B cell (primary cell): ENCODE measurements at regions of chrX and their contacts with region 1.

Region 1: DNA sequence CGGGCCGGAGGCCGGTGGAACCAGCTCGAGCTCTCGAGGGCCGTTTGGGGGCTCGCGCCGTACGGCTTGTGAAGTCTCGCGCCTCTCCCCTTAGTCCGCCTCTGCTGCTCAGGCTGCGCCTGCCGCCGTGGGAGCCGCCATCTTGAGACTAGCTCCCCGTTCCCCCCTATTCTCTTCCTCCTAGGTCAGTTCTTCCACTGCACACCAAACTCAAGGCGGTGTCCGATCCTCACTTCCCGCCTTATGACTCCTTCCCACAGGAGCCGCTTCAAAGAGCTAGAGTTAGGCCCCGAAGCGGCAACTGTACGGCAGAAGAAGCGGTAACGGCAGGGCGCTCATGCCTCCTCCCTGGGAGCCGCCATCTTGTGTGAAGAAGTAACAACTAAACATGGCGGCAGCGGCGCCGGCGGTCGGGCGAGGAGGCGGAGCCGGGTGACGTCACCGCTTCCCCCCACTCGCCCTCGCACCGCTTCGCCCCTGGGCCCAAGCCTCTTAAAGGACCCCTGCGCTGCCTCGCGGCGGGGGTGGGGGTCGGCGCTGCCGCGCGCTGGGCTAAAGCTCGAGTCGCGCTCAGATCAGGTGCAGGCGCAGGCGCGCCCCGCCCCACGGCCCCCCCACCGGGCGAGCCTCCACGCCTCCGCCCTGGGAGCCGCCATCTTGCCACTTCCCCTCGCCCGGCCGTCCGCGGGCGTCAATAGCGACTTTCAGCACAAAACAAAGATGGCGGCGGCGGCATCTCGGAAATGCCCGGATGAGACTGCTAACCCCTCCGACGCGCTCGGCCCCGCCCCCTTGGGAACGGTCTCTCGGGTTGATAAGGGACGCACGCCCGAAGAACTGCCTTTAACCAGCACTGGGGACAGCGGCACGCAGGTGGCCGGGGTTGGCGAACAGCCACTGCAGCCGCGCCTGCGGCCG is at the start of gene HCFC1:
- DNase-seq: peak; percentile 95
- ATAC-seq: peak; percentile 46
- H3K4me3 ChIP-seq: peak within 1 kb of the TSS; percentile 63 to 99 (median 97)
- H3K4me3 Mint-ChIP-seq: peak within 1 kb of the TSS; percentile 100
- H3K27ac ChIP-seq: peak within 1 kb of the TSS; percentile 100
- H3K27ac Mint-ChIP-seq: peak within 1 kb of the TSS; percentile 100
- H3K4me1 ChIP-seq: peaks cover 46 to 50% of the 10 kb centered on the region in 2 donors
- H3K4me1 Mint-ChIP-seq: peaks cover 47% of the 10 kb centered on the region
- H3K27me3 ChIP-seq: no peaks in the 10 kb centered on the region
- H3K27me3 Mint-ChIP-seq: no peaks in the 10 kb centered on the region
- CTCF ChIP-seq: no peak
- total RNA-seq, gene HCFC1: 57.7 and 59.4 TPM in 2 replicates

Region 2: GRCh38 chrX:152941328-152942106 is 1030.2 kb before region 1 on chrX:
- CTCF ChIA-PET with region 1: no interaction called
- POLR2A ChIA-PET with region 1: no interaction called
- intact Hi-C with region 1: loop called (anchors 10 kb)
- DNase-seq: peak; percentile 93
- ATAC-seq: peak; percentile 93
- H3K4me3 ChIP-seq: peak overlapping the region; percentile 36 to 70 (median 53)
- H3K4me3 Mint-ChIP-seq: peak overlapping the region; percentile 91
- H3K27ac ChIP-seq: peak overlapping the region; percentile 67 to 76
- H3K27ac Mint-ChIP-seq: peak overlapping the region; percentile 91
- H3K4me1 ChIP-seq: peaks cover 5 to 12% of the 10 kb centered on the region in 2 donors
- H3K4me1 Mint-ChIP-seq: peaks cover 9% of the 10 kb centered on the region
- H3K27me3 ChIP-seq: no peaks in the 10 kb centered on the region
- H3K27me3 Mint-ChIP-seq: no peaks in the 10 kb centered on the region
- CTCF ChIP-seq: peak; percentile 81

Region 3: GRCh38 chrX:153582896-153583295 is 388.8 kb before region 1 on chrX:
- CTCF ChIA-PET with region 1: no interaction called
- POLR2A ChIA-PET with region 1: no interaction called
- intact Hi-C with region 1: no loop called
- DNase-seq: peak; percentile 84
- ATAC-seq: peak; percentile 100
- H3K4me3 ChIP-seq: peak overlapping the region in 3 of 5 experiments; percentile 9 to 26 (median 18)
- H3K4me3 Mint-ChIP-seq: peak overlapping the region; percentile 73
- H3K27ac ChIP-seq: peak overlapping the region in 1 of 2 donors; percentile 16
- H3K27ac Mint-ChIP-seq: peak overlapping the region; percentile 81
- H3K4me1 ChIP-seq: peaks cover 15 to 27% of the 10 kb centered on the region in 2 donors
- H3K4me1 Mint-ChIP-seq: peaks cover 25% of the 10 kb centered on the region
- H3K27me3 ChIP-seq: no peaks in the 10 kb centered on the region
- H3K27me3 Mint-ChIP-seq: no peaks in the 10 kb centered on the region
- CTCF ChIP-seq: no peak

Region 4: DNA sequence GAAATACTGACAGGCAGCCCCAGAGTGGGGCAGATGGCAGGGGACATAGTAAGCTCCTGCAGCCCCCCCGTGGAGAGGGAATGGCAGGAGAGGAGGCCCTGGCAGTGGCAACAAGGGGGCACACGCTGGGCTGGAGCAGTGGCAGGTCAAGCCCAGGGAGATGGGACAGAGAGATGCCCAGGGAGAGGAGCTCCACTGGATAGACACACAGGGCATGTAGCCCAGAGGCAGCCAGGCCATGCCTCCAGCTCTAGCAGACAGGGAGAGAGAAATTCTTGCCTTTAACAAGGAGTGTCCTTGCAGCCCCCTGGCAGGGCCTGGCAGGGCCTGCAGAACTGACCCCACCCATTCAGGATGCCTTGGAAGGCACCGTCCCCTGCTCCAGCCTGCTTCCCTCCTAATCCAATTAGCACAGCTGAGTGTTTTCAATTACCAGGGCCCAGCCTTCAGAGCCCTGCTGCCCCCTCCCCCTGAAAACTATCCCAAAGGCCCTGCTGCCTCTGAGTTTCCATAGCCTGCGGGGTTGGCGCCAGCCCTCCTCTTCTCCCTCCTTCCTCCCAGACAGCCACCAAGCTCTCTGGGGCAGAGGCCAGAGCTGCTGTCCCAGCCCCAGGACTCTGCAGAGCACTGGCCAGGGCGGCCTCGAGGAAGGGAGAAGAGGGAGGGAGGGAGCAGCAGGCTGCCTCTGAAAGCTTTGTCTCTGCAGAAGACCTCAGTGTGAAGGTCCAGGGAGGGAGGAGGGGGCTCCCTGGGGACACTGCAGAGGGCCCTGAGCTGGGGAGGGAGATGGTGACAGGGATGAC is 98.2 kb before region 1 on chrX:
- CTCF ChIA-PET with region 1: no interaction called
- POLR2A ChIA-PET with region 1: no interaction called
- intact Hi-C with region 1: no loop called
- DNase-seq: no peak
- ATAC-seq: no peak
- H3K4me3 ChIP-seq: no peak overlapping the region
- H3K4me3 Mint-ChIP-seq: no peak overlapping the region
- H3K27ac ChIP-seq: no peak overlapping the region
- H3K27ac Mint-ChIP-seq: no peak overlapping the region
- H3K4me1 ChIP-seq: peaks cover 0 to 3% of the 10 kb centered on the region in 2 donors
- H3K4me1 Mint-ChIP-seq: peaks cover 9% of the 10 kb centered on the region
- H3K27me3 ChIP-seq: peaks cover 0 to 21% (median 4%) of the 10 kb centered on the region in 4 experiments
- H3K27me3 Mint-ChIP-seq: peaks cover 14% of the 10 kb centered on the region
- CTCF ChIP-seq: no peak

Region 5: GRCh38 chrX:153947009-153947769 is 24.5 kb before region 1 on chrX:
- CTCF ChIA-PET with region 1: interaction called, 10 read pairs
- POLR2A ChIA-PET with region 1: interaction called, 4 read pairs
- intact Hi-C with region 1: loop called (anchors 1 kb)
- DNase-seq: peak; percentile 83
- ATAC-seq: peak; percentile 88
- H3K4me3 ChIP-seq: no peak overlapping the region
- H3K4me3 Mint-ChIP-seq: no peak overlapping the region
- H3K27ac ChIP-seq: no peak overlapping the region
- H3K27ac Mint-ChIP-seq: peak overlapping the region; percentile 34
- H3K4me1 ChIP-seq: peaks cover 9 to 39% of the 10 kb centered on the region in 2 donors
- H3K4me1 Mint-ChIP-seq: peaks cover 15% of the 10 kb centered on the region
- H3K27me3 ChIP-seq: no peaks in the 10 kb centered on the region
- H3K27me3 Mint-ChIP-seq: no peaks in the 10 kb centered on the region
- CTCF ChIP-seq: peak; percentile 80

Region 6: DNA sequence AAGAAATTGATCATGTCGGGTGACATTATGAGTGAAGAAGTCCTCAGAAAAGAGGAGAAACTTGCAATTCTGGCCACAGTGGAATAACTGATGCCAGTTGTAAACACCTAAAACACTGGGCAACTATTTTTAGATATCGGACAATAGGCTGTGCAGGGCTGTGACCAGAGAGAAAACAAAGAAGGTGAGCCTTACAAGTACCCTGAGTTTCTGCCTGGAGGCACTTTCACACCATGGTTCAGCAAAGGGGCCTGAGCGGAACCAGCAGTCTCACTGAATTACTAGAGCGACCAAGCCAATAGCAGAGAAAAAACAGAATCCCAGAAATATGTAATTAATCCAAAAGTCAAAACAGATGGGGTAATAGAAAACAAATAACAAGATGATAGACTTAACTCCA is 36.8 kb after region 1 on chrX:
- CTCF ChIA-PET with region 1: interaction called, 12 read pairs
- POLR2A ChIA-PET with region 1: interaction called, 7 read pairs
- intact Hi-C with region 1: loop called (anchors 5 kb)
- DNase-seq: no peak
- ATAC-seq: peak; percentile 34
- H3K4me3 ChIP-seq: no peak overlapping the region
- H3K4me3 Mint-ChIP-seq: peak overlapping the region; percentile 55
- H3K27ac ChIP-seq: peak overlapping the region; percentile 73 to 82
- H3K27ac Mint-ChIP-seq: peak overlapping the region; percentile 98
- H3K4me1 ChIP-seq: peaks cover 28 to 51% of the 10 kb centered on the region in 2 donors
- H3K4me1 Mint-ChIP-seq: peaks cover 40% of the 10 kb centered on the region
- H3K27me3 ChIP-seq: no peaks in the 10 kb centered on the region
- H3K27me3 Mint-ChIP-seq: no peaks in the 10 kb centered on the region
- CTCF ChIP-seq: no peak

Region 7: DNA sequence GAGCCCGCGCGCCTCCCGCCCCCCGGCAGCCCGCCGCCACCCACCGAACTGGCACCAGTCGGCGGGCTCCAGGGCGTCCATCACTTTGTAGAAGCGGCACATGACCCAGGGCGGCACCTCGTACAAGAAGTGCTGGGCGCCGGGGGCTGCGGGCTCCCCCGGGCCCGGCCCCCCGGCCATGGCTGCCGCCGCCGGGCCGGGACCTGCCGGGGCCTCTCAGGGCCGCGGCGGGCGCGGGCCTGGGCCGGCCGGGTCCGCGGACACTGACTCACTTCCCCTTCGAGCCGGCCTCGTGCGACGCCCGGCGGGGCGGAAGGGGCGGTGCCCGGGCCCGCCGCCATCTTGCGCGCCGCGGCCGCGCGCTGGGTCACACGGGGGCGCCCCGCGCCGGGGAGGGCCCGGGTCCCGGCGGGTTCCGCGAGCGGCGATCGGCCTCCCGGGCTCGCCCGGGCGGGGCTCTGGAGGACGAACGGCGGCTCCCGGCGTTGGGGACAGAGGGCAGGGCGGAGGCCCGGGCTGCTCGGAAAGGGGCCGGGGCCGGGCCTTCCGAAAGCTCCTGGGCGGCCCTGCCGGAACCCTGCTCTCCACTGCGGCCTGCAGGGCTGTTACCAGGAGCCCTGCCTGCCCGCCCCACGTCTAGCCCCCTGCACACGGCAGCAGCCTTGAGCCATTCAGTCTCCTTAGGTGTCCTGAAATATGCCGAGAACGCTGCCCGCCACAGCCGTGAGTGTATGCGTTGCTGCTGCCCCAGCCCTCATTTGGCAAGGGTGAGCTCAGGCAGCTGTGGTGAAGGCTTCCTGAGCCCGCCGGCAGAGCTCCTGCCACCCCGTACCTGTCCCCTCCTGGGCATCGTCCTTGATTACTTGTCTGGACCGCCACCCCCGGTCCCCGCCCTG is 48.2 kb after region 1 on chrX and contains the start of gene IRAK1:
- CTCF ChIA-PET with region 1: interaction called, 21 read pairs
- POLR2A ChIA-PET with region 1: interaction called, 11 read pairs
- intact Hi-C with region 1: loop called (anchors 2 kb)
- DNase-seq: peak; percentile 74
- ATAC-seq: peak; percentile 82
- H3K4me3 ChIP-seq: peak within 1 kb of the TSS in 4 of 5 experiments; percentile 55 to 67 (median 64)
- H3K4me3 Mint-ChIP-seq: peak within 1 kb of the TSS; percentile 88
- H3K27ac ChIP-seq: peak within 1 kb of the TSS; percentile 50 to 74
- H3K27ac Mint-ChIP-seq: peak within 1 kb of the TSS; percentile 91
- H3K4me1 ChIP-seq: peaks cover 6 to 21% of the 10 kb centered on the region in 2 donors
- H3K4me1 Mint-ChIP-seq: peaks cover 18% of the 10 kb centered on the region
- H3K27me3 ChIP-seq: no peaks in the 10 kb centered on the region
- H3K27me3 Mint-ChIP-seq: no peaks in the 10 kb centered on the region
- CTCF ChIP-seq: no peak
- total RNA-seq, gene IRAK1: 112 and 121 TPM in 2 replicates

Region 8: DNA sequence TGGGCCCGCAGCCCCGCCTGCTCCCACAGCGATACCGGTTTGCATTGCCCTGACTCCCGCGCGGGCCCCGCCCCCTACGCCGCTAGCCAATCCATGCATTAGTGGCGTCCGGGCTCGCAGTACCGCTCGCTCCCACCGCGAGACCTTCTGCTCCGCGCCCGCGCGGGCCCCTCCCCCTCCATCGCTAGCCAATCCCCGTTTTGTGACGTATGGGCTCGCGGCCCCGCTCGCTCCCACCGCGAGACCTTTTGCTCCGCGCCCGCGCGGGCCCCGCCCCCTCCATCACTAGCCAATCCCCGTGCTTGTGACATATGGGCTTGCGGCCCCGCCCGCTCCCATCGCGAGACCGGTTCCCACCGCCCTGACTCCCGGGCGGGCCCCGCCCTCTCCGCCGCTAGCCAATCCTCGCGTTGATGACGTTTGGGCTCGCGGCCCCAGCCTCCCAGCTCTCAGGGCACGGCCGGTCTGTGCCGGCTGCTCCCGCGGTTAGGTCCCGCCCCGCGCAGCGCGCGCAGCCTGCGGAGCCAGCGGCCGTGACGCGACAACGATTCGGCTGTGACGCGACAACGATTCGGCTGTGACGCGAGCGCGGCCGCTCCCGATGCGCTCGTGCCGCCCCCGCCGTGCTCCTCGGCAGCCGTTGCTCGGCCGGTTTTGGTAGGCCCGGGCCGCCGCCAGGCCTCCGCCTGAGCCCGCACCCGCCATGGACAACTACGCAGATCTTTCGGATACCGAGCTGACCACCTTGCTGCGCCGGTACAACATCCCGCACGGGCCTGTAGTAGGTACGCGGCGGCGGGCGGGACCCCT is 407.3 kb after region 1 on chrX and contains the start of gene EMD:
- CTCF ChIA-PET with region 1: no interaction called
- POLR2A ChIA-PET with region 1: no interaction called
- intact Hi-C with region 1: loop called (anchors 5 kb)
- DNase-seq: peak; percentile 98
- ATAC-seq: peak; percentile 79
- H3K4me3 ChIP-seq: peak within 1 kb of the TSS in 4 of 5 experiments; percentile 67 to 83 (median 72)
- H3K4me3 Mint-ChIP-seq: peak within 1 kb of the TSS; percentile 86
- H3K27ac ChIP-seq: peak within 1 kb of the TSS; percentile 90 to 99
- H3K27ac Mint-ChIP-seq: peak within 1 kb of the TSS; percentile 92
- H3K4me1 ChIP-seq: peaks cover 21 to 33% of the 10 kb centered on the region in 2 donors
- H3K4me1 Mint-ChIP-seq: peaks cover 24% of the 10 kb centered on the region
- H3K27me3 ChIP-seq: no peaks in the 10 kb centered on the region
- H3K27me3 Mint-ChIP-seq: no peaks in the 10 kb centered on the region
- CTCF ChIP-seq: no peak
- total RNA-seq, gene EMD: 67.2 and 81.7 TPM in 2 replicates